GM12878 (cell line): ENCODE measurements at regions of chr1 and their contacts with region 1.

Region 1: GRCh38 chr1:111148376-111148881 is 8.4 kb downstream of the CEPT1 start:
- DNase-seq: no peak
- ATAC-seq: peak; percentile 77
- H3K4me3 ChIP-seq: peak overlapping the region; percentile 13
- H3K27ac ChIP-seq: peak overlapping the region; percentile 30
- H3K4me1 ChIP-seq: peaks cover 15% of the 10 kb centered on the region
- H3K27me3 ChIP-seq: no peaks in the 10 kb centered on the region
- CTCF ChIP-seq: no peak
- EP300 ChIP-seq: no peak
- POLR2A ChIP-seq: no peak
- RAD21 ChIP-seq: no peak

Region 2: DNA sequence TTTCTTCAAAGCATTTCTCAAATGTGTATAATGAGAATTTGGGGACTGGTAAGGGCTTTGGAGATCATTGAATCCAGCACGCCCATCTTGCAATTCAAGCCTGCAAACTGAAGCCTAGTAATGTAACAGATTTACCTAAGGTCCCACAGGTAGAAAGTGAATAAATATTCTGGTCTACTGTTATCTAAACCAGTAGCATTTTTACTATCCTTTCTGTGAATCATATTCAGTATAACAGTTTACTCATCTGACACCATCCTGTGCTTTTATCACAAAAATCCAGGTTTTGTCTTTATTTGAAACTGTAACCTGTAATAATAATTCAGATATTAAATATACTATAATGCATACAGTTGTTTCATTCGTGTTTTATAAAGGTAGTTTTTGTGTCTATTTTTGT is 491.1 kb before region 1 on chr1:
- CTCF ChIA-PET with region 1: no interaction called
- POLR2A ChIA-PET with region 1: no interaction called
- RAD21 ChIA-PET with region 1: no interaction called
- SMC1A ChIA-PET with region 1: no interaction called
- in situ Hi-C with region 1: no loop called
- intact Hi-C with region 1: no loop called
- DNase-seq: no peak
- ATAC-seq: no peak
- H3K4me3 ChIP-seq: no peak overlapping the region
- H3K27ac ChIP-seq: no peak overlapping the region
- H3K4me1 ChIP-seq: no peaks in the 10 kb centered on the region
- H3K27me3 ChIP-seq: no peaks in the 10 kb centered on the region
- CTCF ChIP-seq: no peak
- EP300 ChIP-seq: no peak
- POLR2A ChIP-seq: no peak
- RAD21 ChIP-seq: no peak

Region 3: DNA sequence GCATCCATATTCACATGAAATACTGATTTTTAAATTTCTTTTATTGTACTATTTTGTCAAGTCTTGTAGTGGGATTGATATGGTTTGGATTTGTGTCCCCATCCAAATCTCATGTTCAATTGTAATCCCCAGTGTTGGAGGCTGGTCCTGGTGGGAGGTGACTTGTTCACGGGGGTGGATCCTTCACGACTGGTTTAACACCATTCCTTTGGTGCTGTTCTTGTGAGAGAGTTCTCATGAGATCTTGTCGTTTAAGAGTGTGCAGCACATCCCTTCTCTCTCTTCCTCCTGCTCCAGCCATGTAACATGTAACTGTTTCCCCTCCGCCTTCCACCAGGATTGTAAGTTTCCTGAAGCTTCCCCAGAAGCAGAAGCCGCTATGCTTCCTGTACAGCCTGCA is 36.4 kb before region 1 on chr1:
- CTCF ChIA-PET with region 1: no interaction called
- POLR2A ChIA-PET with region 1: no interaction called
- RAD21 ChIA-PET with region 1: no interaction called
- SMC1A ChIA-PET with region 1: no interaction called
- in situ Hi-C with region 1: no loop called
- intact Hi-C with region 1: no loop called
- DNase-seq: no peak
- ATAC-seq: no peak
- H3K4me3 ChIP-seq: no peak overlapping the region
- H3K27ac ChIP-seq: no peak overlapping the region
- H3K4me1 ChIP-seq: no peaks in the 10 kb centered on the region
- H3K27me3 ChIP-seq: no peaks in the 10 kb centered on the region
- CTCF ChIP-seq: no peak
- EP300 ChIP-seq: no peak
- POLR2A ChIP-seq: no peak
- RAD21 ChIP-seq: no peak

Region 4: DNA sequence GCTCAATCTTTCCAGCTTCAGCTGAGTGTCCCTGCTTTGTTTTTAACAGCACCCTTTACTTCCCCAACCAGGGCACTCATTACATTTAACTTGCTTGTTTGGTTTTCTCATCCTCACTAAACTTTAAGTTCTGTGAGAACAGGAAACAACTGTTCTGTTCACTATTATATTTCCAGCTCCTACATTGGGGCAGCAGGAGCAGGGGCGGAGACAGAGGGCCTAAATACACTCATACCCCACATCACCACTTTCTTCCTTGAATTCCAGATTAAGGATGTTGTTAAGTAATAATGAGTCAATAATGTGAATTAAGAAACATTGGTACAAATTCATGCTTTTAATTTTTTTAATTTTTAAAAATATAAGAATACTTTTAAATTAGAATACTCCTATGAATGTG is 14.6 kb before region 1 on chr1:
- CTCF ChIA-PET with region 1: interaction called, 6 read pairs
- POLR2A ChIA-PET with region 1: interaction called, 62 read pairs
- RAD21 ChIA-PET with region 1: interaction called, 8 read pairs
- SMC1A ChIA-PET with region 1: interaction called, 101 read pairs
- in situ Hi-C with region 1: no loop called
- intact Hi-C with region 1: no loop called
- DNase-seq: no peak
- ATAC-seq: no peak
- H3K4me3 ChIP-seq: no peak overlapping the region
- H3K27ac ChIP-seq: peak overlapping the region; percentile 52
- H3K4me1 ChIP-seq: peaks cover 44% of the 10 kb centered on the region
- H3K27me3 ChIP-seq: no peaks in the 10 kb centered on the region
- CTCF ChIP-seq: no peak
- EP300 ChIP-seq: no peak
- POLR2A ChIP-seq: no peak
- RAD21 ChIP-seq: no peak

Region 5: DNA sequence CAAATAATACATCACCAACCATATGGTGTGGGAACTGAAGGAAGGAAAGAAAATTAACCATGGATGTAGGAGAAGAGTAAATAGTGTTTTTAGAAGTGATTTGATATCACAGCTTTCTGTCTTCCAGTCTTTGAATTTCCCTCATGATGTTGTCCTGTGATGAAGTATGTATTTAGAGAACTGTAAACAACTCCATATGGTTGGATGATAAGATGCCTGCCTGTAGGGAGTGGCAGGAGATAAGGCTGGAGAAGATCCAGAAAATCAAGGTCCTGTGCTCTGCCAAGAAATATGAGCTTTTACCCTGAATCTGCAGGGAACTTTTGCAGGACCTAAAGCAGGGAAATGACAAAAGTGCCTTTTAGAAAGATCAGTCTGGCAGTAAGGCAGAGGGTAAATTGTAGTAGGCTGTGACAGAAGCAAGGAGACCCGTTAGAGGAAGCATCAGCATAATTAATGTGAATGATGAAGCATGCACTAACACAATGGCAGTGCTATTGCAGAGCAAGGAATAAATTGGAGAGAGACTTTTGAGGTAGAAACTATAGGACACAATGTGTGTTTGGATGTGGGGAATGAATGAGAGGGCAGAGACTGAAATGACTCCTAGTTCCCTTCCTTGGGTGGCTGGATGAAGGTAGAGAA is 13.5 kb after region 1 on chr1:
- CTCF ChIA-PET with region 1: interaction called, 4 read pairs
- POLR2A ChIA-PET with region 1: interaction called, 62 read pairs
- RAD21 ChIA-PET with region 1: interaction called, 3 read pairs
- SMC1A ChIA-PET with region 1: interaction called, 101 read pairs
- in situ Hi-C with region 1: no loop called
- intact Hi-C with region 1: no loop called
- DNase-seq: no peak
- ATAC-seq: no peak; the same call in 2 of the 3 replicates
- H3K4me3 ChIP-seq: no peak overlapping the region
- H3K27ac ChIP-seq: no peak overlapping the region
- H3K4me1 ChIP-seq: no peaks in the 10 kb centered on the region
- H3K27me3 ChIP-seq: no peaks in the 10 kb centered on the region
- CTCF ChIP-seq: no peak
- EP300 ChIP-seq: no peak
- POLR2A ChIP-seq: no peak
- RAD21 ChIP-seq: no peak

Region 6: GRCh38 chr1:111197598-111198284 is 49.3 kb after region 1 on chr1:
- CTCF ChIA-PET with region 1: interaction called, 21 read pairs
- POLR2A ChIA-PET with region 1: interaction called, 17 read pairs
- RAD21 ChIA-PET with region 1: interaction called, 28 read pairs
- SMC1A ChIA-PET with region 1: interaction called, 46 read pairs
- in situ Hi-C with region 1: no loop called
- intact Hi-C with region 1: loop called (anchors 5 kb)
- DNase-seq: no peak
- ATAC-seq: peak; percentile 28
- H3K4me3 ChIP-seq: peak overlapping the region; percentile 73
- H3K27ac ChIP-seq: peak overlapping the region; percentile 92
- H3K4me1 ChIP-seq: peaks cover 40% of the 10 kb centered on the region
- H3K27me3 ChIP-seq: no peaks in the 10 kb centered on the region
- CTCF ChIP-seq: peak; percentile 54 to 65 (median 55)
- EP300 ChIP-seq: no peak
- POLR2A ChIP-seq: no peak
- RAD21 ChIP-seq: peak; percentile 58

Region 7: GRCh38 chr1:111309690-111310089 is 161.3 kb after region 1 on chr1:
- CTCF ChIA-PET with region 1: no interaction called
- POLR2A ChIA-PET with region 1: no interaction called
- RAD21 ChIA-PET with region 1: no interaction called
- SMC1A ChIA-PET with region 1: no interaction called
- in situ Hi-C with region 1: no loop called
- intact Hi-C with region 1: no loop called
- DNase-seq: no peak
- ATAC-seq: no peak
- H3K4me3 ChIP-seq: no peak overlapping the region
- H3K27ac ChIP-seq: no peak overlapping the region
- H3K4me1 ChIP-seq: no peaks in the 10 kb centered on the region
- H3K27me3 ChIP-seq: no peaks in the 10 kb centered on the region
- CTCF ChIP-seq: no peak
- EP300 ChIP-seq: no peak
- POLR2A ChIP-seq: no peak
- RAD21 ChIP-seq: no peak